ENCODE measurements at regions of chr12 and their contacts with region 1.

Region 1: DNA sequence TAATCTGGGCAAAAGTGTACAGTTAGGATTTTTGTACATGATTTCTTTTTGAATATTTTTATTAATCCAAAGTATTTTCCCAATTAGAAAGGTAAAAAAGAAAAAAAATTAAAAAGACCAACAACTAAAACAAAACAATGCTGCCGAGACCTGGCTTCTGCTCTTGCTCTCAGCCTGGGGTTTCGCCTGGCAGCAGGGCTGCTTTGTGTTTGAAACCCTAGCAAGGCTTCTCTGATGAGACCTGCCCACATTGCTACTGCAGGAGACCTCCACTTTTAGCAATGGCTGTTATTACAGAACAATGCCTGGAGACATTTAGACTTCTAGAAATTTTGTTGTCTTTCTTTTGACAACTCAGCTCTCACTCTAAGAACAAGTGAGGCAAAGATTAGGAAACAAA is 1153.0 kb upstream of the TMEM132C start:
- DNase-seq: no peak
- H3K4me3 ChIP-seq: no peak overlapping the region
- H3K27ac ChIP-seq: no peak overlapping the region
- H3K4me1 ChIP-seq: no peaks in the 10 kb centered on the region
- H3K27me3 ChIP-seq: no peaks in the 10 kb centered on the region
- CTCF ChIP-seq: no peak
- EP300 ChIP-seq: no peak
- POLR2A ChIP-seq: no peak

Region 2: DNA sequence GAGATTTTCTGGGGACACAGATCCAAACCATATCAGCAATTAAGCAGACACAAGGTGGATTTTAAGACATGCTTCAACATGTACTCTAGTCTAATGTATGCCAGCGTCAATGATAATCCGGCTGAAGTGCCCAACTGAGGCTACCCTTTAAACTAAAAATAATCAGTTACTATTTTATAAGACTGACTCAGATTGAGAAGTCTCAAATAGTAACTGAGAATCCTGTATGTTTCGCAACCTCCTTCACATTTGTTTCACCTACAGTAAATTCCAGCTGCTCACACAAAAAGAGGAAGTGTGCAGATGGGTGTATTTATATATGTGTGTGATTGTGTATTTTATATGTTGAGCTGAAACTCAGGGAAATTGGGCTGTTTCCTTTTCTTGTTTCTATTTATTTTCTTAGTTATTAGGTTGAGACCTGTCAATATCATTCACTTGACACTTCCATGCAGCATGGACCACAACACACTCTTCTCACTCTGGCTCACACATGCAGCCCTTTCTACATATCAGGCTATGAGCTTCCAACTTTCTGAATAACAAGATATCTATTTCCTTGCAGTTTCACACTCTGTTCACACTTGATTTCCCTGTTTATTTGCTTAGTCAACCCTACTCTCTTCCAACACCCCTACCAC is 71.8 kb before region 1 on chr12:
- intact Hi-C with region 1: no loop called
- DNase-seq: no peak
- H3K4me3 ChIP-seq: no peak overlapping the region
- H3K27ac ChIP-seq: no peak overlapping the region
- H3K4me1 ChIP-seq: no peaks in the 10 kb centered on the region
- H3K27me3 ChIP-seq: no peaks in the 10 kb centered on the region
- CTCF ChIP-seq: no peak
- EP300 ChIP-seq: no peak
- POLR2A ChIP-seq: no peak

Region 3: GRCh38 chr12:128534906-128535305 is 1421.0 kb after region 1 on chr12:
- intact Hi-C with region 1: loop called in 1 of 4 experiments (anchors 5 kb)
- DNase-seq: no peak
- H3K4me3 ChIP-seq: no peak overlapping the region
- H3K27ac ChIP-seq: no peak overlapping the region
- H3K4me1 ChIP-seq: no peaks in the 10 kb centered on the region
- H3K27me3 ChIP-seq: no peaks in the 10 kb centered on the region
- CTCF ChIP-seq: no peak
- EP300 ChIP-seq: no peak
- POLR2A ChIP-seq: no peak

Measured in ovary (tissue), 10 donors.